ENCODE measurements at regions of chr3 and their contacts with region 1.

Region 1: GRCh38 chr3:12556671-12557472 is at the start of gene MKRN2:
- DNase-seq: peak; percentile 92 to 94 (median 92)
- ATAC-seq: peak; percentile 93
- H3K4me3 ChIP-seq: peak within 1 kb of the TSS; percentile 82
- H3K27ac ChIP-seq: peak within 1 kb of the TSS; percentile 91
- H3K4me1 ChIP-seq: peaks cover 17 to 22% of the 10 kb centered on the region in 2 experiments
- H3K27me3 ChIP-seq: no peaks in the 10 kb centered on the region
- CTCF ChIP-seq: 0 out of 6 replicates have a peak, but pooled peaks of 1 of the 3 experiments have one; percentile 6
- EP300 ChIP-seq: peak; percentile 70
- POLR2A ChIP-seq: peak; percentile 99
- RAD21 ChIP-seq: peak in 1 of 2 experiments; percentile 2; a peak in 1 of 4 replicates
- polyA plus RNA-seq, gene MKRN2: 29.4 to 46.0 TPM

Region 2: DNA sequence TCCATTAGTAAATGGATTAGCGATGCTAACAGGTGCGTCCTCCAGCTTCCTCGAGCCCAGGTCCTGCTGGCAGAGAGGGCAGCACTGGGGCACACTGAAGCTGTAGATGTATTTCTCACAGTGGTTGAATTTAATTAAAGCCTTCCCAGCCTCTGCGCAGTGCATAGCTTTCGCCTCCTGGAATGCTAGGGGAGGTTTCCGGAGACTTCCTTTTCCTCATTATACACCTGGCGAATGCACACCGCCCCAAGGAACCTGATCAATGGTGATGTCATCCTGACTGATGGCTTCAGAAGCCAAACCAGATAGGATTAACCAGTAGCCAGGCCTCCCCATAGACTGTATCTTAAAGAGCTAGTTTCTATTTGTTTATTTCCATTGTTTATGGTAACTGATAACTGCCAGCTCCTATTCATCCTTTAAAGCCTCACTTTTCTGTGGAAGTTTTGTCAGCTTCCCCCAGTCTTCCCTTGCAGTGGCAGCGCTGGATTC is 11.5 kb before region 1 on chr3 and contains the start of gene MKRN2OS:
- CTCF ChIA-PET with region 1: no interaction called
- POLR2A ChIA-PET with region 1: interaction called, 25 read pairs
- in situ Hi-C with region 1: no loop called
- intact Hi-C with region 1: no loop called
- DNase-seq: no peak
- ATAC-seq: no peak; the same call in 2 of the 3 replicates
- H3K4me3 ChIP-seq: no peak within 1 kb of the TSS
- H3K27ac ChIP-seq: no peak within 1 kb of the TSS
- H3K4me1 ChIP-seq: no peaks in the 10 kb centered on the region
- H3K27me3 ChIP-seq: no peaks in the 10 kb centered on the region
- CTCF ChIP-seq: no peak
- EP300 ChIP-seq: no peak
- POLR2A ChIP-seq: no peak
- RAD21 ChIP-seq: no peak
- polyA plus RNA-seq, gene MKRN2OS: 0.11 TPM in 1 of 2 experiments, not detected in the other

Measured in K562 (cell line).